Dendritic cell treated with granulocyte-macrophage colony-stimulating factor and Interleukin-4, amounts not matched to agents 40 ng/mL and 50 ng/mL, for 4 days (primary cell): ENCODE measurements at regions of chr20 and their contacts with region 1.

Region 1: DNA sequence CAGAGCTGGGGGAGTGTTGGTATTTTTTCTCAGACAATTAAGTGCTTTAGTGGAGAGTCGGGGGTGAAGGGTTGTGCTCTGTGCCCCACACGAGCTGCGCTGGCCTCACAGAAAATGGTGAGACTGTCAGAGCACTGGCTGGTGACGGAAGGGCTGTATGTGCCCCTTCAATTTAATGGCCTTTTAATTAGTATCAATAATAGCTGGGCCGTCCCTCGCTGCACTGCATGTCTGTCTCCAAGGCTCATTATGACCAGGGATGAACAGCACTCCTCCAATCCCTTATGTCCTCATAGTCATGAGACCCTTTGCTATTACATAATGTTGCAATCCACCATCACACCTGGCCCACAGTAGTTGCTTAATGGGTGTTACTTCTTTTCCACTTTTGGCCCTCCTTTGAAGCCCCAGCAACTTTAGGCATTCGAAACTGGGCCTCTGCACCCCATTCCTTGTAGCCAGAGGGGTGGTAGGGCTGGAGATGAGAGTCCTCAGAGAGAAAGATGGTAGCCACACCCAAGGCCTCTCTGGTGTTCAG is 9.5 kb upstream of the RALY start:
- H3K4me3 Mint-ChIP-seq: no peak overlapping the region
- H3K27ac Mint-ChIP-seq: no peak overlapping the region
- H3K4me1 Mint-ChIP-seq: peaks cover 6% of the 10 kb centered on the region
- H3K27me3 Mint-ChIP-seq: peaks cover 2% of the 10 kb centered on the region

Region 2: DNA sequence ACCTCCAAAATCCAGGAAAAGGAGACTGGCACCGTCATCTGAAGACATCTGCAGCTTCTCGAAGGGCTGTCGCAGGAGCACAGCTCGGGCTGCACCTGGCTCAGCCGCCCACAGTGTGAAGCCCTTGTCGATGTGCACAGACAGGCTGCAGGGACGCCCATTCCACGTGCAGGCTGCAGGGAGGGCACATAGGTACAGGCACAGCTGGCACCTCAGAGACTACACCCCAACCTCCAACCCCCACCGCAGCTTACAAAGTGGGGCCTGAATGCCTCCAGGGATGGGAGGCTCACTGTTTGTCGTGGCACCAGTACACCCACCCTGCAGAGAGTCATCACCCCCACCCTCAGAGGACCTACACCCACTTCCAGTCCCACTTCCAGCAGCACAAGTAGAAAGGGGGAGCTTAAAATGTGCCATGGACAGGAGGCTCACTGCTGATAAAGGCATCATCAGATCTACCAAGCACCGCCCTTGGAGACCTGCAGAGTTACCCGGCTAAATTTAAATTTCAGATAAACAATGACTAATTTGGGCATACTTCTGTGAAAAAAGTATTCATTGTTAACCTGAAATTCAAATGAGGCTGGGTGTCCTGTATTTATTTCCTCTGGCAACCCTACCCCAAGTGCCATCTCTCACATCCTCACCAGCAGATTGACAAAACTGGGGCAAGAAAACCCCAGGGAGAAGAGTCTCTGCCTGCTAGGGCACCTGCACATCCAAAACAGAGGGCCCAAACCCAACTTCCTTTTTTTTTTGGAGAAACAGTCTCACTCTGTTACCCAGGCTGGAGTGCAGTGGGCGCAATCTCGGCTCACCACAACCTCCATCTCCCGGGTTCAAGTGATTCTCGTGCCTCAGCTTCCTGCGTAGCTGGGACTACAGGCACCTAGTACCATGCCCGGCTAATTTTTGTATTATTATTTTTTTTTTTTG is 575.3 kb before region 1 on chr20:
- intact Hi-C with region 1: loop called (anchors 5 kb)
- H3K4me3 Mint-ChIP-seq: no peak overlapping the region
- H3K27ac Mint-ChIP-seq: peak overlapping the region; percentile 80
- H3K4me1 Mint-ChIP-seq: peaks cover 59% of the 10 kb centered on the region
- H3K27me3 Mint-ChIP-seq: no peaks in the 10 kb centered on the region